AG04450 (cell line): ENCODE measurements at regions of chr11 and their contacts with region 1.

Region 1: DNA sequence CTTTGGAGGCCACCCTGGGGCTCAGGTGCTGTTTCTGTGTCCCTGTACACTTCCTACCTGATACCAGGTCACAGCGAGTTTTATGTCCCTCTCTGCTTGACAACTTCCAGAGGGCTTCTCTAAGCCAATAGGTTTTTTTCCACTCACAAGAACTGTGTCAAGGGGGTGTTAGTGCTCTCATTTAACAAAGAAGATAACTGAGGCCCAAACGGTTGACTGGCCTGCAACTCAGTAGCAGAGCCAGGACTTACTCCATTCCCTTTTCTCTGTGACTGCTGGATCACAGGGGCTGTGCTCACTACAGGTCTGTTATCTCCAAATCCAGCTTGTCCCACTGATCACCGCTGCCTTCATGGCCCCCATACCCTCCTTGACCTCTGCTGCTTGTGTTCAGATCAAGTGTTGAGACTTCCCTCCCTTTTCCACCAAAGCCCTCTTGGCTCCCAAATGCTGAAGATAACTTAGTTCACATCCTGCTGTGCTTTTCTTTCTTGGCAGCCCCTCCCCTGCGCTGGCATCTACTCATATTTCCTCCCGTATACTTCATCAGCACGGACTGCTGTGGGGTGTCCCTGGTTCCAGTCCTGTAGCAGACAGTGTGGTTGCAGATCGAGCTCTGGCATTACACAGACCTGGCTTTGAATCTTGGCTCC is 41.3 kb downstream of the POU2F3 start:
- DNase-seq: no peak
- H3K4me3 ChIP-seq: no peak overlapping the region
- H3K27ac ChIP-seq: no peak overlapping the region
- H3K27me3 ChIP-seq: peaks cover 28% of the 10 kb centered on the region
- CTCF ChIP-seq: no peak

Region 2: GRCh38 chr11:120835601-120836228 is 554.4 kb after region 1 on chr11:
- CTCF ChIA-PET with region 1: no interaction called
- POLR2A ChIA-PET with region 1: no interaction called
- DNase-seq: no peak
- H3K4me3 ChIP-seq: no peak overlapping the region
- H3K27ac ChIP-seq: no peak overlapping the region
- H3K27me3 ChIP-seq: peaks cover 16% of the 10 kb centered on the region
- CTCF ChIP-seq: no peak

Region 3: DNA sequence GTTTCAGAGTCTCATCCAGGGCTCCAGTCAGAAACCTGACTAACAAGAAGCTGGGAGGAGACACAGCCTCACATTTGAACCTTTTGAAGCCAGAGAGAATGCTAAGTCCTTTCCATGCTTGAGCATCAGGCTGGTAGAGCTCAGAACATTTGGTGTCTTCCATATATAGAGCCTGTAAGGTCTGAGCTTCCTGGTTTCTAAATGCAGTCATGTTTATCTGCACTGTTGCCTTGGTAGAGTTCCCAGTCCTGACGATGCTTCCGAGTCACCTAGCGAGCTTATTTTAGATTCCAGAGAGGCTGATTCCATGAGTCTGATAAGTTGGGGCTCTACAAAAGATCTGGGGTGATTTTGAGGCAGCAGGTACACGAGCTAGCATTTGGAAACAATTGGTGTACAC is 1102.4 kb after region 1 on chr11:
- CTCF ChIA-PET with region 1: no interaction called
- POLR2A ChIA-PET with region 1: interaction called, 13 read pairs
- DNase-seq: no peak
- H3K4me3 ChIP-seq: no peak overlapping the region
- H3K27ac ChIP-seq: no peak overlapping the region
- H3K27me3 ChIP-seq: peaks cover 4% of the 10 kb centered on the region
- CTCF ChIP-seq: no peak